K562 (cell line): ENCODE measurements at regions of chr3 and their contacts with region 1.

Region 1: DNA sequence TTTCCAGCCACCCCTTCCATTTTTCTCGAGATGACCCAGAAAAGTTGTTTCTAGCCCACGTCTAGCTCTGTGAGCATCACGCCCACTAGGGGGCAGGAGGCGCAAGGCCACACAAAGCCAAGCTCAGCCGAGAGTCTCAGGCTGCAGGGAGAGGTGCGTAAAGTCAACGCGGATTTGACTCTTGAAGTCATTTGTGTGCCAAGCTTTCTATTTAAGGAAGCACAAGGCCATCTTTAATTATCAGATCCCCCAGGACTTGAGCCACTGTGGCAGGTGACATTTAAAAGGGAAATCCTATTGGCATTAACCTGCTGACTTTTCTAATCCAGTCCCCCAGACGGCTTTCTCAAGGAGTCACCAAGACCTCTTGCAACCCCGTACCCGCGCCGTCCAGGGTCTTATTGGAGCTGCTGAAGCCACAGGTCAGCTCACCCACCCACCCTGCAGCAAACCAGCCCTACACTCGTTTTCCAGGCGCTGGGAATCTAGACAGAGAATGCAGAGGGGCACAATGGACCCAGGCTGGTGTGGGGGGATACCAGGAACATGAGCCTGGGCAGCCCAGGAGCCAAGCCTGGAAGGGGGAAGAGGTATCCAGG is 62.1 kb downstream of the CAPN7 start:
- DNase-seq: peak; percentile 82 to 94 (median 84)
- ATAC-seq: peak; percentile 81
- H3K4me3 ChIP-seq: no peak overlapping the region
- H3K27ac ChIP-seq: peak overlapping the region; percentile 82; the same call in 1 of the 3 replicates
- H3K4me1 ChIP-seq: peaks cover 29 to 32% of the 10 kb centered on the region in 2 experiments
- H3K27me3 ChIP-seq: no peaks in the 10 kb centered on the region
- CTCF ChIP-seq: peak; percentile 97 to 99 (median 99)
- EP300 ChIP-seq: no peak; the same call in 1 of the 2 replicates
- POLR2A ChIP-seq: no peak
- RAD21 ChIP-seq: peak; percentile 100

Region 2: DNA sequence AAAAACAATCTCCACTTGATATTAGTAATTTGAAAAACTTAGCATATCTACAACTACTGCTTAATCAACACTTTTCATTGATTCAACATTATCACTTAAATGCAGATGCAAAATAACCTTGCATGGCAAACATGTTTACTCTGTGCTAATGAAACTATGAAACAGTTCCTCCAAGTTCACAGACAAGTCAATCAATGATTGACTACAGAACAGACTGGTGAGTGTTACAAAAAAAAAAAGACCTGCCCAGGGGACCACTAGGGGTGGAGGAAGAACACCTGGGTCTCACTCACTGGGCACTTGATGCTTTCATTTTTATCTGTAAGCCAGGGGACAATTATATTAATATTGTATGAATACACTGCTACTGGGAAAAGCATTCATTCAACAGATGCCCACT is 325.1 kb before region 1 on chr3:
- CTCF ChIA-PET with region 1: no interaction called
- POLR2A ChIA-PET with region 1: no interaction called
- in situ Hi-C with region 1: no loop called
- intact Hi-C with region 1: no loop called
- DNase-seq: no peak
- ATAC-seq: no peak
- H3K4me3 ChIP-seq: no peak overlapping the region
- H3K27ac ChIP-seq: no peak overlapping the region
- H3K4me1 ChIP-seq: peaks cover 5 to 6% of the 10 kb centered on the region in 2 experiments; a peak in 4 of 5 replicates
- H3K27me3 ChIP-seq: 0 out of 5 replicates have a peak, but pooled peaks cover 0 to 6% of the 10 kb centered on the region in 2 experiments
- CTCF ChIP-seq: no peak
- EP300 ChIP-seq: no peak
- POLR2A ChIP-seq: no peak
- RAD21 ChIP-seq: no peak

Region 3: DNA sequence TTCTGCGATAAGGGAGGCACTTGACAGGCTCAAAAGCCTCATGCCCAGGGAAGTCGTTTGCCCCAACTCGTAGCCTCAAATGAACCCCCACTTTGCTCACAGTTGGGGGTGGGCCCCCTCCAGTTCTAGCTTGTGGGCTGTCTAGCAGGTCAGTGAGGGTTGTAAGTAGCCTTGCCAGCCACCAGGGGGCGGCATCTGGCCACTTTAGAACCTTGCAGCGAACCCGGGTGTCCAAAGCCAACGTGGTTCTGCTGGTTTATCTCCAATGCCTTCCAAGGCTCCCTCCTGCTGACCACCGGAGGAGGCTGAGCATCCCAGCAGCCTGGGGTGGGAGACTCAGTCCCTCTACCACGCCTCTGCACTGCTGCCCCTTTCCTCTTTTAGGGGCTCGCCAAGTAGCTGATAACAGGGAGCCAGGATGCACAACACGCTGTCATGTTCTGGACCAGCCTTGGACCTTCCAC is 160.0 kb before region 1 on chr3:
- CTCF ChIA-PET with region 1: no interaction called
- POLR2A ChIA-PET with region 1: interaction called, 5 read pairs
- in situ Hi-C with region 1: no loop called
- intact Hi-C with region 1: loop called (anchors 5 kb)
- DNase-seq: peak; percentile 91 to 95 (median 92)
- ATAC-seq: peak; percentile 98
- H3K4me3 ChIP-seq: no peak overlapping the region
- H3K27ac ChIP-seq: no peak overlapping the region
- H3K4me1 ChIP-seq: peaks cover 0 to 5% of the 10 kb centered on the region in 2 experiments; a peak in 1 of 5 replicates
- H3K27me3 ChIP-seq: peaks cover 0 to 6% of the 10 kb centered on the region in 2 experiments; a peak in 2 of 5 replicates
- CTCF ChIP-seq: peak; percentile 93 to 99 (median 93)
- EP300 ChIP-seq: no peak
- POLR2A ChIP-seq: no peak
- RAD21 ChIP-seq: peak; percentile 86 to 92

Region 4: DNA sequence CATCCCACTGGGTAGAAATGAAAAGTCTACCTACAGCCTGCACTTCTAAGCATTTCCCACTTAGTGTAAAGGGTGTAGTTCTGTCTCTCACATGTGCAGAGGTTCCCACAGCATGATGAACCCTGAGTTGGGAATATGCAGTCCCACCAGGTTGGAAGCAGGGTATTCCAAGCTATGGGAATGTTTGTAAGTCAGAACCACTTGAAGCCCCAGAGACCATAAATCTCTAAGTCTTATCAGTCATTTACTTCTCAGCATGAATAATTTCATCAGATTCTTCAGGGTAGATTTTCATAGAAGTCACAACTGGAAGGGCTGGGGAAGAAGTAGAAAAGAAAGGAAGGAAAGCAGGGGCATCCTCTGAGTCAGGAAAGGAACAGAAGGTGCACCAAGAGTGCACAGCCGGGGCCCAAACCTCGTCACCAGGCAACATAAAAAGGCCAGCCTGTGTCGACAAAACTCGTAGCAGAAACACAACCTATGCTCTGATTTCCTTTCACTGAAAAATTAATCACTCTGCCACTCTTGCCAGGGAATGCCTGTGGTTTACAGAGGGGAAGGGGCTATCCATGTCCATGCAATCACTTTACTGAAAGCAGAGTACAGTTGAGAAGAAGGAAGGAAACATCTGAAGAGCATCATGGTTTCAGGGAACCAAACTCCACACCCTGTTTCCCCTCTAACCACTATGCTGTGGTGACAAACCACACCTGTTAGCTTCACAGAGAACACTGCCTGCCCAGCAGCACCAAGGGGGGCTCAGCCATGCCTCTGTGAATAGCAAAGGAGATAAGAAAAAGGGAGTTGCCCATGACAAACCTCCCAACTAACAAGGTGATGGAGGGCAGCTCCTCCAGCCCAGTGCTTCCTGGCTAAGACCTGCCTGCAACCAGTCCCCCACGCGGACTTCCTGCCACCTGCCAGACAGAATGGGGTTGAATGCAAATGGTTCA is 23.7 kb after region 1 on chr3:
- CTCF ChIA-PET with region 1: no interaction called
- POLR2A ChIA-PET with region 1: interaction called, 4 read pairs
- in situ Hi-C with region 1: no loop called
- intact Hi-C with region 1: loop called (anchors 2 kb)
- DNase-seq: peak in 2 of 4 experiments; percentile 41 to 44
- ATAC-seq: peak; percentile 44
- H3K4me3 ChIP-seq: no peak overlapping the region
- H3K27ac ChIP-seq: no peak overlapping the region
- H3K4me1 ChIP-seq: peaks cover 22 to 53% of the 10 kb centered on the region in 2 experiments
- H3K27me3 ChIP-seq: no peaks in the 10 kb centered on the region
- CTCF ChIP-seq: no peak
- EP300 ChIP-seq: no peak
- POLR2A ChIP-seq: no peak
- RAD21 ChIP-seq: no peak

Region 5: DNA sequence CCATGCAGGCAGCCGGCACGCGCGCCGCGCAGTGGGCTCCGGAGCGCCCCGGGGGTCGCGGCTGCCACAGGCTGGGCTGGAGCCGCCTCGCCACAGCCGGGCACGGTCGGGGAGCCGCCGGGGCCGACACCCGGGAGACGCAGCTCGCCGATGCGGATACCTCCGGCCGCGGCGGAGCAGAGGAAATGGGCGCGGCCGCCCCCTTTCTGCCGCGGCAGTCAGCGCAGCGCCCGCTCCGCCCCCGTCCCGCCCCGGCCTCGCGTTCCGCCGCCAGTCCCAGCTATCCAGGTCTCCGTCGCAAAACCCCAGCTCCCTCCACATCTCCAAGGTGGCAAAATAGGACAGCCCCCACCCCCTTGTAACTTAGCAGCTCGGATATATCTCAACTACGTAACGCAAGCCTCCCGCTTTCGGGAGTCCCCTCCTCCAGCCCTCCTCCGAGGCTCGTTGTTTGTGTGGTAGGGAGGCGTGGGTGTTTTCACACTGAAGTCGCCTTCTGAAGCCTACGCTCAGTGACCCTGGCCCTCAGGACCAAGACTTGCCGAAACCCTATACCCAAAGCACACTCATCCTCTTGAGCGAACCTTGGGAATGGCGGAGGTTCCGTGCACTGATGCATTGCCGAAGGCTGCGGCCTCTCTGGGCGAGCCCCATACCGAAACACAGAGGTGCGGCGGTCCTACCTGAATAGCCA is 64.4 kb after region 1 on chr3 and contains the start of gene SH3BP5:
- CTCF ChIA-PET with region 1: interaction called, 10 read pairs
- POLR2A ChIA-PET with region 1: no interaction called
- in situ Hi-C with region 1: loop called (anchors 5 kb)
- intact Hi-C with region 1: loop called (anchors 1 kb)
- DNase-seq: peak; percentile 89 to 93 (median 92)
- ATAC-seq: peak; percentile 98
- H3K4me3 ChIP-seq: peak within 1 kb of the TSS; percentile 85
- H3K27ac ChIP-seq: peak within 1 kb of the TSS; percentile 71
- H3K4me1 ChIP-seq: peaks cover 23 to 31% of the 10 kb centered on the region in 2 experiments
- H3K27me3 ChIP-seq: no peaks in the 10 kb centered on the region
- CTCF ChIP-seq: peak; percentile 69 to 88 (median 77)
- EP300 ChIP-seq: no peak
- POLR2A ChIP-seq: peak; percentile 54; the same call in 1 of the 2 replicates
- RAD21 ChIP-seq: peak; percentile 73 to 81
- polyA plus RNA-seq, gene SH3BP5: 2.9 to 3.5 TPM

Region 6: DNA sequence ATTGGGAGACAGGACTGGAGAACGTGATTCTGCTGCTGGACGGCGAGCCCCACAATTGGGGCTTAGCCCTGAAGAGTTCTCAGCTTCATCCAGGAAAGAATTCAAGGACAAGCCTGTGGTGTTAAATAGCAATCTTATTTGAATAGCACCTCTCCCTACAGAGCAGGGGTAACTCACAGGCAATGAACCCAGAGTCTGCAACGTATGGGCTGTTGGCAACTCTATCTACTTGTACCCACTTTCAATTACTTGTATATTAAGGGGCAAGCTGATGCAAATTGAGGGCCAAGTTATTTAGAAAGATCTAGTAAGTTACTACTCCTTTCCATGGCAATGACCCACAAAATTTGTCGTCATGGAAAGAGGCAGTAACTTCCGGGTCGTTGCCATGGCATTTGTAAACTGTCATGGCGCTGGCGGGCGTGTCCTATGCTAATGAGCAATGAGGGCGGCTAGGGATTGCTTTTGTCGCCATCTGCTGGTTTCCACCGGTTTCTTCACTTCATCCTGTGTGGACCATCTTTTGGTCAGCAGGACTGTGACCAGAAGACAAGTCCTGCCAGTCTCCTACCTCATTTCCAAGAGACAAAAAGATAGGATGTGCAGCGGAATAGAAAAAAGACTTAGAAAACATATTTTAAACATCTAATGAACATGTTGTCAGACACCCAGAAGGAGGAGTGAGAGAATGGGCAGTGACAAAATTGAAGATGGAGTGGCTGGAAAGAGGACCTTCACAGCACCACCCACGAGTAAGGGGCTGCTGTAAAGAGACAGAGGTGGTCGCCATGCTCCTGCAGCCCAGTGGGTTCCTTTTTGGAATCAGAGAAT is 110.0 kb after region 1 on chr3:
- CTCF ChIA-PET with region 1: interaction called, 57 read pairs
- POLR2A ChIA-PET with region 1: interaction called, 5 read pairs
- in situ Hi-C with region 1: loop called (anchors 5 kb)
- intact Hi-C with region 1: loop called (anchors 1 kb)
- DNase-seq: peak; percentile 79 to 98 (median 82)
- ATAC-seq: peak; percentile 99
- H3K4me3 ChIP-seq: no peak overlapping the region
- H3K27ac ChIP-seq: peak overlapping the region; percentile 58
- H3K4me1 ChIP-seq: peaks cover 5 to 16% of the 10 kb centered on the region in 2 experiments; a peak in 4 of 5 replicates
- H3K27me3 ChIP-seq: no peaks in the 10 kb centered on the region
- CTCF ChIP-seq: peak; percentile 91 to 99 (median 97)
- EP300 ChIP-seq: peak; percentile 78
- POLR2A ChIP-seq: no peak
- RAD21 ChIP-seq: peak; percentile 99

Region 7: DNA sequence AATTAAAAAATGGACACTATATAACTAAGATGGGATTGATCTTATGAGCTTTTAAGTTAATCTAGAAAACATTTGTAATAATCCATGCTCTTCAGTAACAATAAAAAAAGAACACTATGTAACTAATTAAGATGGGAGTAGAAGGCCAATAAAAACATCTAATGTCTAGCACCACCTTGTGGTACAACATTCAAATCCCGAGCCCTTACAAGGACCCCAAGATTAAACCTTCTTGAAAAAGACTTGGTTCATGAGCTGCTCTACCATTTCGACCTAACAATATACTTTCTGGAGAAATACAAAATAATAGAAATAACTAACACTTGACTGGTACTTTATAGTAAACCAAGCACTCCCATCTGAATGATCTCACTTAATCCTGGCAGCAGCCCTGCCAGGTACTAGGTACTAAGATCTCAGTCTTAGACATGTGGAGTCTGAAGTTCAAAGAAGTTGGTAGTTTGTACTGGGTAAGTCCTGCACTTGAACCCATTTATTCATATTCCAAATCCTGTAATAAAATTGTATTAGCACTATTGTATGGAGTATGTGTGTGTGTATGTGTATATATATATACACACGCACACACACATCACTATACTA is 137.4 kb after region 1 on chr3:
- CTCF ChIA-PET with region 1: interaction called, 30 read pairs
- POLR2A ChIA-PET with region 1: interaction called, 6 read pairs
- in situ Hi-C with region 1: no loop called
- intact Hi-C with region 1: loop called (anchors 1 kb)
- DNase-seq: peak; percentile 62 to 76 (median 63)
- ATAC-seq: peak; percentile 89
- H3K4me3 ChIP-seq: no peak overlapping the region
- H3K27ac ChIP-seq: no peak overlapping the region
- H3K4me1 ChIP-seq: no peaks in the 10 kb centered on the region
- H3K27me3 ChIP-seq: no peaks in the 10 kb centered on the region
- CTCF ChIP-seq: peak; percentile 62 to 88 (median 72)
- EP300 ChIP-seq: no peak
- POLR2A ChIP-seq: no peak
- RAD21 ChIP-seq: peak; percentile 77 to 92